ENCODE measurements at regions of chr3 and their contacts with region 1.

Region 1: GRCh38 chr3:192042116-192042515 is 581.2 kb downstream of the PYDC2 start:
- DNase-seq: peak; percentile 91
- H3K4me3 ChIP-seq: peak overlapping the region; percentile 6
- H3K27ac ChIP-seq: peak overlapping the region; percentile 85
- H3K4me1 ChIP-seq: peaks cover 56% of the 10 kb centered on the region
- CTCF ChIP-seq: no peak

Region 2: GRCh38 chr3:191859531-191859930 is 182.6 kb before region 1 on chr3:
- CTCF ChIA-PET with region 1: no interaction called
- POLR2A ChIA-PET with region 1: no interaction called
- intact Hi-C with region 1: no loop called
- DNase-seq: no peak
- H3K4me3 ChIP-seq: no peak overlapping the region
- H3K27ac ChIP-seq: no peak overlapping the region
- H3K4me1 ChIP-seq: no peaks in the 10 kb centered on the region
- CTCF ChIP-seq: no peak

Region 3: GRCh38 chr3:192063570-192063969 is 21.5 kb after region 1 on chr3:
- CTCF ChIA-PET with region 1: no interaction called
- POLR2A ChIA-PET with region 1: interaction called, 14 read pairs
- intact Hi-C with region 1: loop called (anchors 2 kb)
- DNase-seq: peak; percentile 79
- H3K4me3 ChIP-seq: peak overlapping the region; percentile 12
- H3K27ac ChIP-seq: peak overlapping the region; percentile 57
- H3K4me1 ChIP-seq: peaks cover 37% of the 10 kb centered on the region
- CTCF ChIP-seq: 0 out of 2 replicates have a peak, but pooled peaks have one; percentile 15

Region 4: DNA sequence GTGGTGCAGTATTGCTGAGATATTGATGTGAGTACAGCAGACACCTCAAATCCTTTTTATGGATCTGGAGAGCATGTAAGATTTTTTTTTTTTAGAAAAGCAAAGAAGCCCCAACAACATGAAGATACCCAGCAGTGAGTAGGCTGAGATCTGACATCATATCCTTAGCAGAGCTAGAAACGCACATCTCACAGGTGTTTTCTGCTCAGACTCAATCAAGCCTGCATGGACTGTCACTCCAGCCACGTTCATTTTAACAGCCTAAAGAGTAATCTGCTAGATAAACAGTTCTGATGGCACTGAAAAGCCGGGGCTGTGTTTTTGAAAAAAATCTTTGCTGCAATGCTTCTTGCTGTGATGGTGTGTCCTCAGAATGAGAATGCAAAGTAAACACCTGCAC is 141.0 kb after region 1 on chr3:
- CTCF ChIA-PET with region 1: no interaction called
- POLR2A ChIA-PET with region 1: interaction called, 4 read pairs
- intact Hi-C with region 1: loop called (anchors 1 kb)
- DNase-seq: peak; percentile 91
- H3K4me3 ChIP-seq: peak overlapping the region; percentile 57
- H3K27ac ChIP-seq: peak overlapping the region; percentile 99
- H3K4me1 ChIP-seq: peaks cover 75% of the 10 kb centered on the region
- CTCF ChIP-seq: no peak

Region 5: GRCh38 chr3:193240850-193241706 is 1199.0 kb after region 1 on chr3 and contains the start of gene PLAAT1:
- CTCF ChIA-PET with region 1: no interaction called
- POLR2A ChIA-PET with region 1: no interaction called
- intact Hi-C with region 1: no loop called
- DNase-seq: no peak
- H3K4me3 ChIP-seq: no peak within 1 kb of the TSS
- H3K27ac ChIP-seq: no peak within 1 kb of the TSS
- H3K4me1 ChIP-seq: no peaks in the 10 kb centered on the region
- CTCF ChIP-seq: no peak
- total RNA-seq, gene PLAAT1: not detected in 2 replicates

Measured in OCI-LY7 (cell line).